ENCODE measurements at regions of chr11 and their contacts with region 1.

Region 1: DNA sequence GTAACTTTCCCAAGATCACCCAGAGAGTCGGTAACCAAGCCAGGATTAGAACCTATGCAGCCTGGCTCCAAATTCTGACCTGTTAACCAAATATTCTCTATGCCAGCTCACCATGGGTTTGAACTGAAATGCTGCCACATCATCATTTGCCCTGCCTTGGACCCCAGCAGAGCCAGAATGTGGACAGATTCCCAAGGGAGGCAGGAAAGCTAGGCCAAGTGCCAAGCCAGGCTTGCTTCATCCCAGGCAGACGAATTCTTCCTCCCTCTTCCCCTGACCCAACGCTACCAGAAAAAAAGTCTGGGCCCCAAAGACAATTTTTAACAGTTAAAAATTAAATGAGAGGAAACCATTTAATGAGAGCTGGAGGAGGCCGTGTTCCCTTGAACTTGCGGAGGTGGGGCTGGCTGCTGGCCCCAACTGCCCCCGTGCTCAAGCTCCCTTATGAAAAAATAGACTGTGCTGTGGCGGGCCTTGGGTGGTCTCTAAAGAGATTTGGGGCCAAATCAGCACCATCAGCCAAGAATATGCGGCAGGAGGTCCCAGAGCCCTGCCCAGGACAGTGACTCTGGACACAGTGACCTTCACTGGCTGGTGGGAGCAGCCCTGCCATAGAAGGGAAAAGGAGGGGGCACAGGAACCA is 184.1 kb upstream of the SYT13 start:
- DNase-seq: peak in 1 of 2 donors; percentile 54
- ATAC-seq: no peak
- H3K4me3 ChIP-seq: no peak overlapping the region
- H3K27ac ChIP-seq: no peak overlapping the region
- H3K4me1 ChIP-seq: no peaks in the 10 kb centered on the region
- H3K27me3 ChIP-seq: no peaks in the 10 kb centered on the region

Region 2: GRCh38 chr11:45538363-45538762 is 68.1 kb after region 1 on chr11:
- intact Hi-C with region 1: loop called in 1 of 2 experiments (anchors 10 kb)
- DNase-seq: no peak
- ATAC-seq: peak; percentile 17
- H3K4me3 ChIP-seq: no peak overlapping the region
- H3K27ac ChIP-seq: no peak overlapping the region
- H3K4me1 ChIP-seq: no peaks in the 10 kb centered on the region
- H3K27me3 ChIP-seq: no peaks in the 10 kb centered on the region

Region 3: GRCh38 chr11:45736424-45736823 is 266.2 kb after region 1 on chr11:
- intact Hi-C with region 1: no loop called
- DNase-seq: no peak
- ATAC-seq: peak; percentile 73
- H3K4me3 ChIP-seq: no peak overlapping the region
- H3K27ac ChIP-seq: no peak overlapping the region
- H3K4me1 ChIP-seq: no peaks in the 10 kb centered on the region
- H3K27me3 ChIP-seq: no peaks in the 10 kb centered on the region

Measured in aorta (tissue), 5 donors.